Calu3 (cell line): ENCODE measurements at regions of chr15 and their contacts with region 1.

Region 1: DNA sequence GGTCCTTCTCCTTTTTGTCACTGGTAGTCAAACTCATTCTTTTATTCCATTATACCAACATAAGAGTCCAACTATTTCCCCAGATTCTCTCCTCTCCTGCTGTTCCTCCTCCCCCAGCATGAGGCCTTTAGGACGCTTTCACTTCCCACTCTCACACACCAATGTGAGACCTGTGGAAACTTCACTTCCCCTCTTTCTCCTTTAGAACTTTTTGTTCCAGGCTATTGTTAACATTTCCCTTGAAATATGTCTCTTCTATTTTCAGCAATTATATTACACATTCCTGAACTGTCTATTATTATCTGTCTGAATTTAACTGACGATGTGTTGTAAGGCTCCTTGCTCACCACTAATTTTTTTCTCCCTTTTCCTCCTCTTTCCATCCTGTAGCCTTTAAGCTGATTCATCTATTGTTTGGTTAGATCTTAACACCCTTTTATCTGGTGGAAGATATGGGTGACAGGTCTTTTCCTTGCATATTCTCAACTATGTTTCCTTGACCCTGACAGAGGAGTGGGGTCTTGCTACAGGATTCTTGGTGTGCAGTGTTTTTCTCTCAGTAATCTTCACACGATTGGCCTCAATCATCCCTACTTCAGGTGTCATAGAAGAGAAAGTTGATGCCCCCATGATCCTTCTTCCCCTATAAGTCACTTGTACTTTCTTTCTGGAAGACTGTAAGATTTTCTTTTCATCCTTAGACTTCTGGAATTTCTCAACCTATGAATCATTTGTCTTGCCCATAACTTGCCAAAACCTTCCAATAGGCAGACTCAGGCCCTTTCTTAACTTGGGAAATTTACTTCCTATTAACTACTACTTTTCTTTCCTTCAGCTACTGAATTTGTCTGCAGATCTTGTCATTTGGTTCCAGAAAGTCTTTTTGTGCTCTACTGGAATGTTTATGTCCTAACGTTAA is 5.9 kb downstream of the CYP19A1 start:
- DNase-seq: no peak
- H3K4me3 Mint-ChIP-seq: no peak overlapping the region
- H3K27ac Mint-ChIP-seq: no peak overlapping the region
- H3K4me1 Mint-ChIP-seq: no peaks in the 10 kb centered on the region
- H3K27me3 Mint-ChIP-seq: peaks cover 19% of the 10 kb centered on the region
- CTCF ChIP-seq: no peak

Region 2: GRCh38 chr15:51302156-51303040 is 30.1 kb before region 1 on chr15:
- CTCF ChIA-PET with region 1: no interaction called
- intact Hi-C with region 1: loop called (anchors 1 kb)
- DNase-seq: no peak
- H3K4me3 Mint-ChIP-seq: no peak overlapping the region
- H3K27ac Mint-ChIP-seq: no peak overlapping the region
- H3K4me1 Mint-ChIP-seq: no peaks in the 10 kb centered on the region
- H3K27me3 Mint-ChIP-seq: peaks cover 73% of the 10 kb centered on the region
- CTCF ChIP-seq: no peak

Region 3: DNA sequence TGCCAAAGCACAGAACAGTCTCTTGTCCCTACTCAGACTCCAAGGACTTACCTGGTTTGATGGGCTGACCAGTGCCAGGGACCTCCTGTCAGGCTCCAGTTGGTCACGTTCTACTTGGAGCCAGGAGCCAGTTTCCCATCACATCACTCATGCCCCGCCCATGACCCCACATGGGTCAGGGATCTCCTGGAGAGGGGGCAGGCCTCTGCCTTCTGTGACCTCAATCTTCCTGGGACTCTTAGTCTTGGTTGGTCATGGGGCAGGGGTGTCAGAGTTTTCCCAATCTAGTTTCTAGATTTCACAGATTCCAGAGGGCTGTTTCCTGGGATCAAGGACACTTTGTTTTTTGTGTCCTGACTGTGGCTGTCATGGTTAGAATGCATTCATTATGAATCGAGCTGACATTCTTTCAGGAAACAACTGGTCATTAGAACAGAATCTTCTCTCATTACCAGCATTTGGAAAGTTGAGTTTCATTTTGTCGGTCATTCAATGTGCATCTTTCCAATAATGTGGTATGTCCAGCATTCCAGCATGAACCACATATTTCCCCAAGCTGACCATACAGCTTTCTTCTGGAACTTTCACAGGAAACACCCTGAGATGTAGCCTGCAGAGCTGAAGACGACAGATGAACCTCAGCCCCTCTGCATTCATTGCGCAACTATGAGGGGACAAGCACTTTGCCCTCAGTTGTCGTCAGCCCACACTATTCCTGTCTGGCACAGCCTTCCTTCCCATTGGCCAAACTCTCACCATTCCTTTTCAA is 13.9 kb before region 1 on chr15:
- CTCF ChIA-PET with region 1: no interaction called
- intact Hi-C with region 1: no loop called
- DNase-seq: no peak
- H3K4me3 Mint-ChIP-seq: no peak overlapping the region
- H3K27ac Mint-ChIP-seq: no peak overlapping the region
- H3K4me1 Mint-ChIP-seq: no peaks in the 10 kb centered on the region
- H3K27me3 Mint-ChIP-seq: peaks cover 50% of the 10 kb centered on the region
- CTCF ChIP-seq: no peak